H1 (cell line): ENCODE measurements at regions of chr1 and their contacts with region 1.

Region 1: GRCh38 chr1:42913426-42914091 is 45.1 kb downstream of the SLC2A1 start:
- DNase-seq: peak; percentile 44 to 62
- H3K4me3 ChIP-seq: no peak overlapping the region
- H3K27ac ChIP-seq: no peak overlapping the region
- H3K4me1 ChIP-seq: no peaks in the 10 kb centered on the region
- H3K27me3 ChIP-seq: peaks cover 0 to 1% (median 0%) of the 10 kb centered on the region in 4 experiments; a peak in 1 of 7 replicates
- CTCF ChIP-seq: peak in 2 of 3 experiments; percentile 80 to 88; a peak in 3 of 4 replicates
- EP300 ChIP-seq: no peak
- POLR2A ChIP-seq: no peak
- RAD21 ChIP-seq: peak; percentile 96

Region 2: GRCh38 chr1:42777852-42778251 is 135.7 kb before region 1 on chr1:
- CTCF ChIA-PET with region 1: interaction called, 34 read pairs
- POLR2A ChIA-PET with region 1: no interaction called
- DNase-seq: peak in 1 of 2 experiments; percentile 68
- H3K4me3 ChIP-seq: no peak overlapping the region
- H3K27ac ChIP-seq: no peak overlapping the region
- H3K4me1 ChIP-seq: no peaks in the 10 kb centered on the region
- H3K27me3 ChIP-seq: no peaks in the 10 kb centered on the region
- CTCF ChIP-seq: peak; percentile 53 to 92 (median 76)
- EP300 ChIP-seq: no peak
- POLR2A ChIP-seq: no peak
- RAD21 ChIP-seq: peak; percentile 92 to 94

Region 3: DNA sequence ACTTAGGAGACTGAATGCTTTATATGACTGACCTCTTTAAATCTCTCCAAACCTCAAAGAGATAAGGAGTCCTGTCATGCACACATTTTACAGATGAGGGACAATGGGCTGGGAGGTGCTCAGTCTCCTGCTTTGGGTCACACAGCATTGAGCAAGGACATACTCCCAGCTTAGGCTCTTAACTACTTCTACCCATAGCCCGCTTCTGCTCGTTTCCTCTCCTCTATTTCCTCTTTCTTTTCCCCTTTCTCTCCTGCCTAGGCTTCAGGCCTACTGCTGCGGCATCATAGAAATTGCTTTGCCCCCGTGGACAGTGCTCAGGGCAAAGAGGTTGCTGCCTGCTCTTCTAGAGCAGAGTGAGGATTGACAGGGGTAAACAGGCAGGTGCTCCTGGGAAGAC is 79.6 kb before region 1 on chr1:
- CTCF ChIA-PET with region 1: interaction called, 11 read pairs
- POLR2A ChIA-PET with region 1: no interaction called
- DNase-seq: peak in 1 of 2 experiments; percentile 23
- H3K4me3 ChIP-seq: no peak overlapping the region
- H3K27ac ChIP-seq: no peak overlapping the region
- H3K4me1 ChIP-seq: no peaks in the 10 kb centered on the region
- H3K27me3 ChIP-seq: no peaks in the 10 kb centered on the region
- CTCF ChIP-seq: no peak
- EP300 ChIP-seq: no peak
- POLR2A ChIP-seq: no peak
- RAD21 ChIP-seq: no peak

Region 4: GRCh38 chr1:42846257-42847110 is 67.1 kb before region 1 on chr1 and contains the start of gene ZNF691:
- CTCF ChIA-PET with region 1: interaction called, 10 read pairs
- POLR2A ChIA-PET with region 1: no interaction called
- DNase-seq: peak; percentile 84 to 86
- H3K4me3 ChIP-seq: peak within 1 kb of the TSS; percentile 79 to 82 (median 81)
- H3K27ac ChIP-seq: peak within 1 kb of the TSS; percentile 60; the same call in 1 of the 2 replicates
- H3K4me1 ChIP-seq: peaks cover 2 to 9% (median 5%) of the 10 kb centered on the region in 4 experiments; a peak in 6 of 7 replicates
- H3K27me3 ChIP-seq: no peaks in the 10 kb centered on the region
- CTCF ChIP-seq: peak; percentile 17 to 39 (median 39); a peak in 3 of 4 replicates
- EP300 ChIP-seq: no peak
- POLR2A ChIP-seq: peak; percentile 60 to 61
- RAD21 ChIP-seq: no peak
- total RNA-seq, gene ZNF691: 18.6 and 19.5 TPM in 2 replicates

Region 5: DNA sequence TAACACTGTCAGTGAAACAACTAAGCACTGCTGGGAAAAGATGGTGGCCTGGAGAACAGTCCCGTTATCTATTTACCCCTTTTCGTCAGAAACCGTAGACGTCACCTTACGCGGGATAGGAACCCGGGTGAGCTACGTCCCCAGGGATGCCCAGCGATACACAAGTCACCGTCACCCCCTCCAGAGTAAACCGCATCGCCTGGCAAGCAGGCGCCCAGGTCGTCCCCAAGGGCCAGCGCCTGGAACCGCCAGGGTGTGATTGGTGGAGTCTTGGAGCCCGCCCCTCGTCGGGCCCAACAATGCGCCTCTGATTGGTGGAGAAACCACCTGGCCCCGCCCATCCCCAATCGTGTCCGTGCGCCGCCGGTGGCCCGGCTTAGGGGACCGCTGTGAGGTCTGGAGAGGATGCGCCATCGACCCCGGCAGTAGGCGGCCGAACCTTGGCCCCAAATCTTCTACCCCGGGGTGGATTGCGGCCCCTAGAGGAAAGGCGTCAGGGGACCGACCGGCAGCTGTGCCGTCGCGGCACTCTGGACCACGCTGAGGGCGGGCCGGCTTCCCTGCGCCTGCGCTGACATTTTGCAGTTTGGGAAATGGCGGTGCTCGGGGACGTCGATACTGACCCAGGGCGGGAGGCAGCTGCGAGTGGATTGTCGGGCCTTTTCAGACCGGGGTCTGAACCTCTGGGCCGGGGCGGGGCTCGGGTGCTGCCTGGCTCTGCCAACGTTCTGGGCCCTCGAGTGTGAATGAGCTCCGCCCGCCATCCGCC is 10.7 kb after region 1 on chr1:
- CTCF ChIA-PET with region 1: interaction called, 30 read pairs
- POLR2A ChIA-PET with region 1: interaction called, 7 read pairs
- DNase-seq: peak; percentile 84 to 98
- H3K4me3 ChIP-seq: peak overlapping the region; percentile 54 to 74 (median 60)
- H3K27ac ChIP-seq: peak overlapping the region; percentile 81; the same call in 1 of the 2 replicates
- H3K4me1 ChIP-seq: peaks cover 4 to 10% (median 7%) of the 10 kb centered on the region in 4 experiments; a peak in 6 of 7 replicates
- H3K27me3 ChIP-seq: no peaks in the 10 kb centered on the region
- CTCF ChIP-seq: peak in 2 of 3 experiments; percentile 2 to 33; a peak in 2 of 4 replicates
- EP300 ChIP-seq: no peak
- POLR2A ChIP-seq: peak; percentile 73 to 93
- RAD21 ChIP-seq: peak in 1 of 2 experiments; percentile 7; a peak in 1 of 4 replicates

Region 6: GRCh38 chr1:42979896-42980800 is 66.6 kb after region 1 on chr1:
- CTCF ChIA-PET with region 1: no interaction called
- POLR2A ChIA-PET with region 1: no interaction called
- DNase-seq: no peak
- H3K4me3 ChIP-seq: no peak overlapping the region
- H3K27ac ChIP-seq: no peak overlapping the region
- H3K4me1 ChIP-seq: peaks cover 6 to 16% (median 12%) of the 10 kb centered on the region in 4 experiments
- H3K27me3 ChIP-seq: no peaks in the 10 kb centered on the region
- CTCF ChIP-seq: no peak
- EP300 ChIP-seq: no peak
- POLR2A ChIP-seq: no peak
- RAD21 ChIP-seq: no peak

Region 7: GRCh38 chr1:43065191-43065590 is 151.6 kb after region 1 on chr1:
- CTCF ChIA-PET with region 1: interaction called, 353 read pairs
- POLR2A ChIA-PET with region 1: no interaction called
- DNase-seq: no peak
- H3K4me3 ChIP-seq: no peak overlapping the region
- H3K27ac ChIP-seq: no peak overlapping the region
- H3K4me1 ChIP-seq: peaks cover 0 to 28% (median 20%) of the 10 kb centered on the region in 4 experiments; a peak in 6 of 7 replicates
- H3K27me3 ChIP-seq: peaks cover 0 to 4% (median 2%) of the 10 kb centered on the region in 4 experiments; a peak in 5 of 7 replicates
- CTCF ChIP-seq: no peak
- EP300 ChIP-seq: no peak
- POLR2A ChIP-seq: no peak
- RAD21 ChIP-seq: no peak